Activated naive CD4-positive, alpha-beta T cell treated with anti-CD3 and anti-CD28 coated beads, Interleukin-2, amount 10 ng/mL, durations not matched to agents 7 days and 5 days (primary cell): ENCODE measurements at regions of chr16 and their contacts with region 1.

Region 1: DNA sequence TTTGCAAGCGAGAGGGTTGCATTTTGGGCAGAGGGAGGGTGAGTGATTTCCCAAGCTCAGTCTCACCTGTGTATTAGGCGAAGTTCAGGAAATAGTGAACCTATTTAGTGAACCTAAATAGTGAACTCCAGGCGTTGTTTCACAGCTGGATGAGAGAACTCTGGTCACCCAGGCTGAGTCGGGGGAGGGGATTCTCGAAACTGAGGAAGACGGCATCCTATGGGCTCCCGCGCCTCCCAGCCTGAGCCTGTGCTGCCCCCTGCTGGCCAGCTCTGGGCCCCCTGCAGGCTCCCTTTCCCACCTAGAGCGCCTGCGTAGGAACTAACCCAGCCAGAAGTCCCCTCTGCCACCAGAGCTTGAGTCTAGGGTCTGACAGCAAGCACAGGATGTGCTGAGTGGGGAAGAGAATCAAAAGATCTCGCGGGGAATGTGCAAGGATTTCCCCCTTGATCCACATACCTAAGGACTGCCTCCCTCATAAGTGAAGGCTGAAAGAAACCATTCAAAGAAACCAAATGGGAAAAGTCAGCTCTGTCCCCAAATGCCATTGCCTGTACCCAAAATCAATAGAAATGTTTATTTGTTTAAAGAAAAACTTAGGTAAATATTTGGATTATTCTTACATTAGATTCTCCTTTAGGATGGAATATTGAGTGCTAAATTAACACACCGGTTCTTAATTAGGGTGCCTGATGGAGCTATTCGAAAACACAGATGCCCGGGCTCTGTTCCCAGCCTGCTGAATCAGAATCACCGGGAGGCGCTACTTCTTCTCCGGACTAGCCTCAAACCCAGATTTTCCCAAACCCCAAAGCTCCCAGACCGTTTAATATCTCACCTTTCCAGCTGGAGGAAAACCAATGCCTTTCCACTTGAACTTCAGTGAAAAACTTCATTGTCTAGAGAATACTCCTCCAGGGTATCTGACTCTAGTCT is 14.8 kb upstream of the MARVELD3 start:
- DNase-seq: peak; percentile 84
- H3K4me3 Mint-ChIP-seq: no peak overlapping the region
- H3K27ac Mint-ChIP-seq: no peak overlapping the region
- H3K4me1 Mint-ChIP-seq: peaks cover 4% of the 10 kb centered on the region
- H3K27me3 Mint-ChIP-seq: peaks cover 60% of the 10 kb centered on the region

Region 2: DNA sequence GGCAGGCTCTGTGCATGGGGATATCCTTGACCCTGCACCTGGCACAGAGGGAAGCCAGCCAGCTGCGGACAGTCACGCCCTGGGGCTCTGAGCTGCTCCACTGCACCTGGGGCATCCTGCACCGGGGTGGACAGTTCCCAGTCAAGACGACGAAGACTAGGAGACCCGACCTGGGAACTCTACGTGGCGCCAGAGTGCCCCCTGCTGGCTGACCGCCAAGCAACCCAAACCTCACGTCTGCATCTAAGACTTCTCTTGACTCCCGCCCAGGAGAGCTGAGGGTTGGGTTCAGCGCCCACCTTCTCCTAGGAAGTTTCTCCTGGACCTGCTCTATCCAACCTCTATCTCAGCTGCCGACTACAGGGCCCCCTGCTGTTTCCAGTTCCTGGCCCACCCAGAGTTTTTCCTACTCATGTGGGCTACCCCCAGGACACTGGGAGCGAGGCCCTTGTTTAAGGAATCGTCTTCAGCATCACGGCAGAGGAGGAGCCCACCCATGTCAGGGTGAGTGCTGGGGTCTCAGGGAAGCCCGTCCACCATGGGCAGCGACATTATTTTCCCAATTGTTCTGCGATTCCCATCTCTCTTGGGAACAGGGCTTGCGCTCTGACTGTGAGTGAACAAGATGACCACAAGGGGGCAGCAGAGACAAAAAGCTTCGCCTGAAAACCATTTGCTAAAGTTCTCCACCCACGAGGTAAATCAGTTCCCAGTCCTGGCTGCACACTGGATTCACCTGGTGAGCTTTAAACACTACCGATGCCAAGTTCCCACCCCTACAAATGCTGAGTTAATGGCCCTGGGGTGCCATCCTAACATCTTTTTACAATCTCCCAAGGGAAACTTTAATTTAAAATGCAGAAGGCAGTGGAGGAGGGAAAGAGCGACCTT is 198.7 kb before region 1 on chr16:
- CTCF ChIA-PET with region 1: interaction called, 36 read pairs
- DNase-seq: peak; percentile 73
- H3K4me3 Mint-ChIP-seq: no peak overlapping the region
- H3K27ac Mint-ChIP-seq: no peak overlapping the region
- H3K4me1 Mint-ChIP-seq: peaks cover 3% of the 10 kb centered on the region
- H3K27me3 Mint-ChIP-seq: peaks cover 43% of the 10 kb centered on the region

Region 3: DNA sequence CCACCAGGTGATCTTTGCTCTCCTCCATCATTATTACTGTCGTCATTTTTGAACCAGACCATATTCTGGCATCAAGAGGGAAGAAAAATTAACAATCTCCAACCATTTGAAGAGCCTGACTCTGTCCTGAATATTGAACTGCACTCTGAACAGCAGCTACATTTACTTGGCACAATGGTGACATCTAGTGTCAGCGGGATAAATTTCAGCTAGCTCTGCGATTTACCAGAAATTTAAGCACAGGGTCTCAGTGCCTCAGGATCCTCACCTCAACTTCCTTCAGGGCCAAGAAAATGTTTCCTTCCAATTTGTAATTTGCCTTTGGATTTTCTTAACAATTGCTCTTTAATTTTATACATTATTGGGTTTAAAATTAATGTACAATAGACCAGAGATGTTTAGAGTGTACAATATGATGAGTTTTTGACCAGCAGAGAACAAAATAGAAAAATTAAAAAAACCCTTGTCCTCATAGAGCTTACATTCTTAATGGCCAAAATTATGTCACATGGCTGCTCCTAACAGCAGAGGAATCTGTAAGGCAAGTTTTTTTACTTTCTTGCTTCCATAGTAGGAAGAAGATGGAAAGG is 111.3 kb before region 1 on chr16:
- CTCF ChIA-PET with region 1: interaction called, 26 read pairs
- DNase-seq: peak; percentile 67
- H3K4me3 Mint-ChIP-seq: no peak overlapping the region
- H3K27ac Mint-ChIP-seq: no peak overlapping the region
- H3K4me1 Mint-ChIP-seq: no peaks in the 10 kb centered on the region
- H3K27me3 Mint-ChIP-seq: no peaks in the 10 kb centered on the region

Region 4: DNA sequence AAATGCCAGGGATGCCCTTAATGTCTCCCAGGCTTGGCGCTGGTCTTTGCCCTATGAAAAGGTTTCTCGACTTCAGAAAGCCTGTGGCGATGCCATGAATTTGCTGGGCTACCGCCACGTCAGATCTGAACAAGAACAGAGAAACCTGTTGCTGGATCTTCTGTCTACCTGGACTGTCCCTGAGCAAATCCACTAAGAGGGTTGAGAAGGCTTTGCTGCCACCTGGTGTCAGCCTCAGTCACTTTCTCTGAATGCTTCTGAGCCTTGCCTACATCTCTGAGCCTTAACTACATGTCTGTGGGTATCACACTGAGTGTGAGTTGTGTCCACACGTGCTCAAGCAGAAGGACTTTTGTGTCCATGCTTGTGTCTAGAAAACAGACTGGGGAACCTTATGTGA is 73.6 kb before region 1 on chr16:
- CTCF ChIA-PET with region 1: interaction called, 28 read pairs
- DNase-seq: peak; percentile 59
- H3K4me3 Mint-ChIP-seq: no peak overlapping the region
- H3K27ac Mint-ChIP-seq: no peak overlapping the region
- H3K4me1 Mint-ChIP-seq: no peaks in the 10 kb centered on the region
- H3K27me3 Mint-ChIP-seq: peaks cover 8% of the 10 kb centered on the region

Region 5: DNA sequence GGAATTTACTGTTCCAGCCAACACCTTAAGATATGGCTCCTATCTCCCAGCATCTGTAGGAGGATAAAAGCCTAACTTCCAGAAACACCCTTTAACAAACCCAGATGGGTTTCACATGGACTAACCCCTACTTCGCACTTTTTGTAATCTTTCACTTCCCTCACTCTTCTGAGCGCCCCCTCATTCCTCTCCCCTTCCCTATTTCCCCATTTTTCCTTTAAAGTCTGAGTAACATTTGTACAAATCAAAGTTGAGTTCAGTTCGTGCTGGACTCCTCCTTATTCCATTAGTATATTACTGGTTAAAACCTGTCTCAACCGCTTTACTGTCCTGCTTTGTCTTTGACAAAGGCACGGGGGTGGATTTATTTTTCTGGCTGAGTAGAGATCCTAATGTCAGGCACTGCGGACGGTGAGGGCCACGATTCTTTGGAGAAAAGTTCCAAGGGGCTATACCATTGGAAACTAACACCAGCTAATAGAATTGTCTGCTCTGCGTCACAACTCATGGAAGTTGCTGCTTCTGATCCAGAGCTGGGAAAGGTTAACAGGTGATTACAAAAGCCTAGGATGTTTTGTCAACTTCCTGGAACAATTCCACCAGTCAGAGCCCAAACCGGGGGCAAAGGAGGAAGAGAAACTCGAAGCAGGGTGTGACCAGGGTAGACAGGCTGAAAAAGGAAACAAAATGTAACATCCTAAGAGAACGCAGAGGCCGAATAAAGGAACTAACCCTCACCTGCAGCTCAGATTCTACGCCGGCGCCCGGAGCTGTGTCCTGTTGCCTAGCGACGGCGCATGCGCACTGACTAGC is 46.8 kb before region 1 on chr16:
- CTCF ChIA-PET with region 1: interaction called, 73 read pairs
- DNase-seq: no peak
- H3K4me3 Mint-ChIP-seq: peak overlapping the region; percentile 84
- H3K27ac Mint-ChIP-seq: peak overlapping the region; percentile 94
- H3K4me1 Mint-ChIP-seq: peaks cover 19% of the 10 kb centered on the region
- H3K27me3 Mint-ChIP-seq: peaks cover 15% of the 10 kb centered on the region

Region 6: GRCh38 chr16:71758293-71758760 is 147.1 kb after region 1 on chr16:
- CTCF ChIA-PET with region 1: no interaction called
- DNase-seq: no peak
- H3K4me3 Mint-ChIP-seq: no peak overlapping the region
- H3K27ac Mint-ChIP-seq: no peak overlapping the region
- H3K4me1 Mint-ChIP-seq: no peaks in the 10 kb centered on the region
- H3K27me3 Mint-ChIP-seq: no peaks in the 10 kb centered on the region

Region 7: GRCh38 chr16:71794943-71795342 is 183.7 kb after region 1 on chr16:
- CTCF ChIA-PET with region 1: no interaction called
- DNase-seq: no peak
- H3K4me3 Mint-ChIP-seq: no peak overlapping the region
- H3K27ac Mint-ChIP-seq: no peak overlapping the region
- H3K4me1 Mint-ChIP-seq: peaks cover 47% of the 10 kb centered on the region
- H3K27me3 Mint-ChIP-seq: no peaks in the 10 kb centered on the region

Region 8: DNA sequence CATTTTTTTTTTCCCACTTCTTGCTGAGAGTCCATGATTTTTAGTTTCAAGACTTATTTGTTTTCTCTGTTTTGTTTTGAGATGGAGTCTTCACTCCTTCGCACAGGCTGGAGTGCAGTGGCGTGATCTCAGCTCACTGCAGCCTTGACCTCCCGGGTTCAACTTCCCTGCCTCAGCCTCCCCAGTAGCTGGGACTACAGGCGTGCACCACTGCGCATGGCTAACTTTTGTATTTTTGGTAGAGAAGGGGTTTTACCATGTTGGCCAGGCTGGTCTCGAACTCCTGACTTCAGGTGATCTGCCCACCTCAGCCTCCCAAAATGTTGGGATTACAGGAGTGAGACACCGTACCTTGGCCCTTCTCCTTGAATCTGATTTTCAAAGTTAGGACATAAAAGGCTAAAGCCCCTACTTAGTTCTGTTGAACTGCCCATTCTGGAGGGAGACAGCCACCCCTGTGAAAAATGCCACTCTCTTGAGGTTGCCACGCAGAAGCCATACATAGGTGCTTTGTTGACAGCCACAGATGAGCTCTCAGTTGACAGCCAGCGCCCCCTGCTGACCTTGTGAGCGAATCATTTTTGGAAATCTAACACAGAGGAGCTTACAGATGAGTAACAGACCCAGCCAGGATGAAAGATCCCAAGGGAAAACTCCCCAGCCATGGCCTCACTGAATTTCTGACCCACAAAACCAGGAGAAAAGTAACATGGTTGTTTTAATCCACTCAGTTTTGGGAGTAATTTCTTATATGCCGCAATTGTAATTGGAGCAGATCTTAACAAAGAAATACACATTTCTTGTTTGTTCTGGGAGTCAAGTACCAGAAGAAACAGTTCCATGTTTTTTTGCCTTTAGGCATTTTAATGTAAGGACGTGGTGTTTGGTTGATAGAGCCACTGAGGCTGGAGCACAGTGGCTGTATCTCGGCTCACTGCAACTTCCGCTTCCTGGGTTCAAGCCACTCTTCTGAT is 350.1 kb after region 1 on chr16:
- CTCF ChIA-PET with region 1: interaction called, 10 read pairs
- DNase-seq: peak; percentile 91
- H3K4me3 Mint-ChIP-seq: no peak overlapping the region
- H3K27ac Mint-ChIP-seq: no peak overlapping the region
- H3K4me1 Mint-ChIP-seq: peaks cover 29% of the 10 kb centered on the region
- H3K27me3 Mint-ChIP-seq: peaks cover 19% of the 10 kb centered on the region